ENCODE measurements at regions of chr5 and their contacts with region 1.

Region 1: GRCh38 chr5:142548739-142549275 is 137.1 kb downstream of the FGF1 start:
- DNase-seq: peak; percentile 41
- H3K4me3 ChIP-seq: no peak overlapping the region
- H3K27ac ChIP-seq: no peak overlapping the region
- H3K4me1 ChIP-seq: peaks cover 0 to 9% (median 6%) of the 10 kb centered on the region in 4 donors
- H3K27me3 ChIP-seq: peaks cover 33% of the 10 kb centered on the region
- CTCF ChIP-seq: peak; percentile 59 to 86 (median 69)
- EP300 ChIP-seq: no peak
- POLR2A ChIP-seq: no peak

Region 2: GRCh38 chr5:142151436-142152383 is 397.1 kb before region 1 on chr5:
- in situ Hi-C with region 1: loop called in 3 of 4 experiments (anchors 10 to 25 kb)
- intact Hi-C with region 1: no loop called
- DNase-seq: peak; percentile 41
- H3K4me3 ChIP-seq: no peak overlapping the region
- H3K27ac ChIP-seq: no peak overlapping the region
- H3K4me1 ChIP-seq: peaks cover 0 to 3% (median 0%) of the 10 kb centered on the region in 4 donors
- H3K27me3 ChIP-seq: no peaks in the 10 kb centered on the region
- CTCF ChIP-seq: peak; percentile 76 to 88 (median 82)
- EP300 ChIP-seq: no peak
- POLR2A ChIP-seq: no peak

Region 3: DNA sequence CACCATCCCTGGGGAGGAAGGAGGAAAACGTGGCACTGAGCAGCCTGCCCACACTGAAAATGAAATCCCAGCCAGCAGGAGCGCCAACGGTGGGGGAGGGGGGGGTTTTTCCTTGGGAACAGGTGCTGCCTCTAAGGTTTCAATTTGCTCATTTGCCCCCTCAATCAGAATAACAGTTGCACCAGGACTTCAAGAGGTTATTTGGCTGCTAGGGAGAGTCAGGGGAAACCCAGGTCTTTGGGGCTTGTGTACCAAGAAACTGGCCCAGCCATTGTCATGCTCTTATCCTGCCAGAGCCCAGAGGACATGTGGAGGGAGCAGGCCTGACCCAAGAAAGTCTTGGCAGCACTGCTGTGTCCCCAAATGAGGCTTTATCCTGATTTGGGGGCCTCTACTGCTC is 373.8 kb before region 1 on chr5:
- in situ Hi-C with region 1: loop called in 3 of 4 experiments (anchors 10 to 25 kb)
- intact Hi-C with region 1: no loop called
- DNase-seq: no peak
- H3K4me3 ChIP-seq: no peak overlapping the region
- H3K27ac ChIP-seq: no peak overlapping the region
- H3K4me1 ChIP-seq: peaks cover 0 to under 1% (median 0%) of the 10 kb centered on the region in 4 donors
- H3K27me3 ChIP-seq: no peaks in the 10 kb centered on the region
- CTCF ChIP-seq: no peak
- EP300 ChIP-seq: no peak
- POLR2A ChIP-seq: no peak

Region 4: DNA sequence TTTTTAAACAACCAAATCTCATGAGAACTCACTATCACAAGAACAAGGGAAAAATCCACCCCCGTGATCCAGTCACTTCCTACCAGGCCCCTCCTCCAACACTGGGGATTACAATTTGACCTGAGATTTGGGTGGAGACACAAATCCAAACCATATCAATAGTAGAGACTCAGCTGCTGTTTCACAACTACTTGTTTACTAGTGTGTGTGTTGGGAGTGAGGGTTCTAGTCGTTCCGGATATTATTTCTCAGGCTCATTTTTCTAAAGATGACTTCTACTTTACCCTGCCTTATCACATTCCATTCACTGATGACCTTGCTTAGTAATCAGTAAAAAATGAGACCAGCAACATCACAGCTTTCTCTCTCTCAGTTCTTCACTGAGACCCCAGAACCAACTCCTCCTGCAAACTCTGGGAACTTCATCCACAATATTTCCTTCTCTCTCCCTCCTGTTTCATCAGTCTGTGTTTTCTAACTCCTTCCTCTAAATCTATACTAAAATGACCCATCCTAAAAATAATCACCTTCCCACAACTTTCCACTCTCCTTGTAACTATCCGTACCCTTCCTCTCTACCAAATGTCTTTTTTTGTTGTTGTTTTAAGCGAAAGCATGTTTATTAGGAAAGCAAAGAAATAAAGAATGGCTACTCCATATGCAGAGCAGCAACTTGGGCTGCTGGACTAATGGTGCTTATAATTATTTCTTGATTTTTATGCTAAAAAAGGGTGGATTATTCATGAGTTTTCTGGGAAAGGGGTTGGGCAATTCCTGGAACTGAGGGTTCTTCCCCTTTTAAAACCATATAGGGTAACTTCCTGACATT is 102.5 kb before region 1 on chr5:
- in situ Hi-C with region 1: no loop called
- intact Hi-C with region 1: no loop called
- DNase-seq: no peak
- H3K4me3 ChIP-seq: no peak overlapping the region
- H3K27ac ChIP-seq: no peak overlapping the region
- H3K4me1 ChIP-seq: no peaks in the 10 kb centered on the region
- H3K27me3 ChIP-seq: no peaks in the 10 kb centered on the region
- CTCF ChIP-seq: no peak
- EP300 ChIP-seq: no peak
- POLR2A ChIP-seq: no peak

Measured in transverse colon (tissue), 4 donors.